ENCODE measurements at regions of chr14 and their contacts with region 1.

Region 1: GRCh38 chr14:32252030-32252670 is 49.1 kb upstream of the RNU6-8 start:
- DNase-seq: peak; percentile 65 to 70 (median 69)
- H3K4me3 ChIP-seq: no peak overlapping the region
- H3K4me3 Mint-ChIP-seq: no peak overlapping the region
- H3K27ac ChIP-seq: no peak overlapping the region
- H3K27ac Mint-ChIP-seq: no peak overlapping the region
- H3K4me1 ChIP-seq: peaks cover 3% of the 10 kb centered on the region
- H3K4me1 Mint-ChIP-seq: no peaks in the 10 kb centered on the region
- H3K27me3 ChIP-seq: no peaks in the 10 kb centered on the region
- H3K27me3 Mint-ChIP-seq: no peaks in the 10 kb centered on the region

Region 2: DNA sequence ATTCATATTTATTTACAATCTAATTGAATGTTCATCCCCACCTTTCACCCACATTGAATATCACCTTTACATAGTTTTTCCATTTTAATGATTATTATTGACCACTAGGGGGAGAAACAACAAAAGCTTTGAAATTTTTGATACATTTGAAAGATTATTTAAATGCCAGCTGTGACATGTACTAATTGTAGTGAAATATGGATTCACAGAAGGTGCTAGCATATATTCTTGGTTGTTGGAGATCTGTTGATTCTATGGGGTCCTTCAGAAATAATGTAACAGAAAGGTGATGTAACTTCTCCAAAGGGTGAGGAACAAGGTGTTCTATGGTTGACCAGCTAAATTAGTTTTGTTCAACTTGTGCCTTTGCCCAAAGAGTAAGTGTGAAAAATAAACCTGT is 741.9 kb before region 1 on chr14:
- CTCF ChIA-PET with region 1: interaction called, 34 read pairs
- POLR2A ChIA-PET with region 1: no interaction called
- intact Hi-C with region 1: no loop called
- DNase-seq: peak in 4 of 5 donors; percentile 16 to 24 (median 22)
- H3K4me3 ChIP-seq: no peak overlapping the region
- H3K4me3 Mint-ChIP-seq: no peak overlapping the region
- H3K27ac ChIP-seq: no peak overlapping the region
- H3K27ac Mint-ChIP-seq: no peak overlapping the region
- H3K4me1 ChIP-seq: no peaks in the 10 kb centered on the region
- H3K4me1 Mint-ChIP-seq: no peaks in the 10 kb centered on the region
- H3K27me3 ChIP-seq: no peaks in the 10 kb centered on the region
- H3K27me3 Mint-ChIP-seq: peaks cover 0 to 6% of the 10 kb centered on the region in 2 donors

Region 3: DNA sequence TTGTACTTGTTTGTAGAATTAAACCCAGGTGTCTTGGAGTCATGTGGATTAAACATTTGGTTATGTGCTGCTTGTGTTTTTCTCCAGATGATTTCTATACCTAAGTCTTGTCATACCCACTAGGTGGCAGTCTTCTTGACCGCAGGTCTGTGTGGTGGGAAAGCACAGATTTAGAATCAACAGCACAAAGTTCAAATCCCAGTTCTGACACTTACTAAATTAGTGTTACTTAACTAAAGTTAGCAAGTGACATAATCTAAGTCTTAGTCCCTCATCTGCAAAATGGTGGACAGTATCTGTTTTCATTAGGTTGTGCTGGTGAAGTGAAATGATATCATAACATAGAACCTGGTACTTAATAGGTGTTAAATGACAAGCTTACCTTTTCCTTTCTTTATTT is 326.0 kb before region 1 on chr14:
- CTCF ChIA-PET with region 1: interaction called, 174 read pairs
- POLR2A ChIA-PET with region 1: no interaction called
- intact Hi-C with region 1: loop called (anchors 1 kb)
- DNase-seq: peak in 4 of 5 donors; percentile 47 to 54 (median 52)
- H3K4me3 ChIP-seq: no peak overlapping the region
- H3K4me3 Mint-ChIP-seq: no peak overlapping the region
- H3K27ac ChIP-seq: no peak overlapping the region
- H3K27ac Mint-ChIP-seq: peak overlapping the region in 1 of 7 donors; percentile 63
- H3K4me1 ChIP-seq: peaks cover 11% of the 10 kb centered on the region
- H3K4me1 Mint-ChIP-seq: peaks cover 7 to 14% (median 12%) of the 10 kb centered on the region in 4 donors
- H3K27me3 ChIP-seq: no peaks in the 10 kb centered on the region
- H3K27me3 Mint-ChIP-seq: no peaks in the 10 kb centered on the region

Region 4: DNA sequence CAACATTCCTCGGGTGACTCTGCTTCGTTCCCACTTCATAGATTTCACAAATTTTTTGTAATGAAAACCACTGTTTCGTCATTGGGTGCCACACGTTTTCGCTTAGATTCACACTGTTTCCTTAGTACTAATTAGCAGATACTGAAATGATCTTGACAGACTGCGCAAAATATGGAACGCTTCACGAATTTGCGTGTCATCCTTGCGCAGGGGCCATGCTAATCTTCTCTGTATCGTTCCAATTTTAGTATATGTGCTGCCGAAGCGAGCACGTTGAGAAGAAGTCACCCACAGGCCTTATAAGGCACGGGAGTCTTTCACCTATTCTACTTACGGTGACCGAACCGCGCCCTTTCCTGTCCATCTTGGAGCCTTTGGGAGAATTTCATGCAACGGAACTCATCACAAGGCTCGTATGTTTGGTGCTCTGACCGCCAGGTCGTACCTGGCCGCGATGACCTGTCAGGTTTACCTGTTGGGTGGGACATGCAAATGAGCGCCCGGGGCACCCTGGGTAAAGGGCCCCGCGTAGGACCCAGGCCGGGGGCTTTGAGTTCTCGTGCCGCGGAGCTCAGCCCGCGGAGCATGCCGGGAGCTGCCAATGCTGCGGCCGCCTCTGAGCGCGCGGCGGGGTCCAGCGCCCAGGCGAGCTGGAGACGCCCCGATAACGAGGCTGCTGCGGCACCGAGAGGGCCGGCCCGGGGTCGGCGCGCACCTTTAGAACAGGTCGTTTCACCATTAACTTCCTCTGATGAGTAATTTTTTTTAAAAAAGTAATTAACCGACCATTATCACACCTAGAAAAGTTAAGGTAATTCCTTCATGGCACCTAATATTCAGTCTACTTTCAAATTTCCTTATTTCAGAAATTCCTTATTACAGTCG is 48.9 kb before region 1 on chr14 and contains the start of gene RNU6-8:
- CTCF ChIA-PET with region 1: interaction called, 6 read pairs
- POLR2A ChIA-PET with region 1: interaction called, 3 read pairs
- intact Hi-C with region 1: loop called (anchors 1 kb)
- DNase-seq: peak; percentile 89 to 95 (median 94)
- H3K4me3 ChIP-seq: peak within 1 kb of the TSS; percentile 50 to 68
- H3K4me3 Mint-ChIP-seq: peak within 1 kb of the TSS; percentile 90 to 96 (median 93)
- H3K27ac ChIP-seq: peak within 1 kb of the TSS; percentile 94
- H3K27ac Mint-ChIP-seq: peak within 1 kb of the TSS; percentile 96 to 100 (median 99)
- H3K4me1 ChIP-seq: peaks cover 23% of the 10 kb centered on the region
- H3K4me1 Mint-ChIP-seq: peaks cover 22 to 41% (median 28%) of the 10 kb centered on the region in 4 donors
- H3K27me3 ChIP-seq: no peaks in the 10 kb centered on the region
- H3K27me3 Mint-ChIP-seq: peaks cover 0 to 2% of the 10 kb centered on the region in 2 donors
- total RNA-seq, gene RNU6-8: not detected